Motor neuron (in vitro differentiated cells): ENCODE measurements at regions of chr15 and their contacts with region 1.

Region 1: GRCh38 chr15:38699633-38700230 is 135.1 kb upstream of the RASGRP1 start:
- ATAC-seq: peak in 3 of 8 experiments; percentile 64 to 83 (median 76)
- H3K4me3 ChIP-seq: no peak overlapping the region
- H3K27ac ChIP-seq: no peak overlapping the region
- H3K4me1 ChIP-seq: peaks cover 0 to 3% of the 10 kb centered on the region in 2 donors

Region 2: DNA sequence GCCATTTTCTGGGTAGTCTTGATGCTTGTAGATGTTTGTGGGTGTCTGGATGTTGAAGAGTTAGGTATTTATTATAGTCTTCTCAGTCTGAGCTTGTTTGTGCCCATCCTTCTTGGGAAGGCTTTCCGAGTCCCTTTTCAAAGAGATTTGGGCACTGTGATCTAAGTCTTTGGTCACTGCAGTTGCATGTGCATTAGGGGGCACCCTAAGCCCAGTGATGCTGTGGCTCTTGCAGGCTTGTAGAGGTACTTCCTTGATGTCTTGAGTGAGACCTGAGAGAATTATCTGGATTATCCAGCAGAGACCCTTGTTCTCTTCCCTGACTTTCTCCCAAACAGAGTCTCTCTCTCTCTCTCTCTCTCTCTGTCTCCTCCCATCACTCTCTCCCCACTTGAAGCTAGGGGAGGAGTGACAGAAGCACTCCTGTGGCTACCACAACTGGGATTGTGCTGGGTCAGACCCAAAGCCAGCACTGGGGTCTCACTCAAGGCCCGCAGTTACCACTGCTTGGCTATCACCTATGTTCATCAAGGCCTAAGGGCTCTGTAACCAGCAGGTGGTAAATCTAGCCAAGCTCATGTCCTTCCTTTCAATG is 696.8 kb before region 1 on chr15:
- in situ Hi-C with region 1: loop called in 4 of 9 experiments (anchors 25 kb)
- ATAC-seq: peak in 4 of 8 experiments; percentile 49 to 95 (median 86)
- H3K4me3 ChIP-seq: no peak overlapping the region
- H3K27ac ChIP-seq: no peak overlapping the region
- H3K4me1 ChIP-seq: peaks cover 8 to 11% of the 10 kb centered on the region in 2 donors

Region 3: DNA sequence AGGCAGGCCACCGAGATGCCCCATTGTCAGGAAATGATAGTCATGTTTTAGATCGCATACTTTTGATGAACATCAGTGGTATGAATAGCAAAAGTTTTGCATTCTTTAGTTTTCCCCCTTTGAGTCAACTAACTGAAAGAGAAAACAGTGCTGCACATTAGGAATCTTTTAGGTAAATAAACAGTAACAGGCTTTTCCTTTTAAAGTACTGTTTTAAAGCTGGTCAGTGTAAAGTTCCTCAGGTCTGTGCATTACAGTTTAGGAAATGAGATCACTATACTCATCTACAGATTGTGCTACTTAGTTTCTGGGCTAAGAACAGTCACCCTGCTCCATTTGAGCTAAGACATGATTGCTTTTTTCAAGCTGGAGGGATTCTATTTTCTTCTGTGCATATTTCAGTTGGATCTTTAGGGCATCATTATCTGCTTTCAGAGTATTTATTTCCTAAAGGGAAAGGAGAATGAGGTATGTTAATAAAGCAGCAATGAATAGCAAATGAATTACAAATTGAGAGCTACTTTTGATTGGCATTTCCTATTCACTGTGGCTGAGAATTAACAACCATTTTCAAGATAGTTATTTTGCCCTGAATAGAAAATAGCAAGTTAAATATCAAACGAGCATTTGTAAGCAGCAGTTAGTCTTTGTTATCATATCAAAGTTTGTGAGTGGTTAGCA is 209.3 kb before region 1 on chr15:
- in situ Hi-C with region 1: loop called in 1 of 9 experiments (anchors 25 kb)
- ATAC-seq: peak in 3 of 8 experiments; percentile 54 to 66 (median 65)
- H3K4me3 ChIP-seq: no peak overlapping the region
- H3K27ac ChIP-seq: no peak overlapping the region
- H3K4me1 ChIP-seq: no peaks in the 10 kb centered on the region

Region 4: GRCh38 chr15:38991126-38991525 is 291.4 kb after region 1 on chr15:
- in situ Hi-C with region 1: loop called in 1 of 9 experiments (anchors 25 kb)
- ATAC-seq: peak in 1 of 8 experiments; percentile 32
- H3K4me3 ChIP-seq: no peak overlapping the region
- H3K27ac ChIP-seq: no peak overlapping the region
- H3K4me1 ChIP-seq: peaks cover 0 to 6% of the 10 kb centered on the region in 2 donors

Region 5: DNA sequence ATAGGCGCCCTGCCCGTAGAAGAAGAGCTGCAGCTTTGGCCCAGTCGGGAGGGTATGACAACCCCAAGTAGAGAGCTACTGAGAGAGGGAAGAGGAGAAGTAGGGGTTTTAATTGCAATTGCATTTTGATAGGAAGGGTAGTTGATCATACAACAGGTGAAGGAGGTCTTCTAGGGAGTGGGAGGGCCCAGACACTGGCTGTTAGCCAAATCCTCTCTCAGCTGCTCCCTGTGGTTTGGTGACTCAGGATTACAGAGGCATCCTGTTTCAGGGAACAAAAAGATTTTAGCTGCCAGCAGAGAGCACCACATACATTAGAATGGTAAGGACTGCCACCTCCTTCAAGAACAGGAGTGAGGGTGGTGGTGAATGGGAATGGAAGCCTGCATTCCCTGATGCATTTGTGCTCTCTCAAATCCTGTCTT is 472.2 kb after region 1 on chr15:
- in situ Hi-C with region 1: no loop called
- ATAC-seq: peak; percentile 65 to 100 (median 93)
- H3K4me3 ChIP-seq: no peak overlapping the region
- H3K27ac ChIP-seq: no peak overlapping the region
- H3K4me1 ChIP-seq: peaks cover 7 to 15% of the 10 kb centered on the region in 2 donors

Region 6: GRCh38 chr15:39580117-39580484 is 880.4 kb after region 1 on chr15:
- in situ Hi-C with region 1: loop called in 1 of 9 experiments (anchors 25 kb)
- ATAC-seq: peak; percentile 75 to 90 (median 86)
- H3K4me3 ChIP-seq: peak overlapping the region; percentile 30 to 48 (median 39)
- H3K27ac ChIP-seq: no peak overlapping the region
- H3K4me1 ChIP-seq: peaks cover 0 to 5% of the 10 kb centered on the region in 2 donors